Endothelial cell of umbilical vein (primary cell): ENCODE measurements at regions of chr4 and their contacts with region 1.

Region 1: DNA sequence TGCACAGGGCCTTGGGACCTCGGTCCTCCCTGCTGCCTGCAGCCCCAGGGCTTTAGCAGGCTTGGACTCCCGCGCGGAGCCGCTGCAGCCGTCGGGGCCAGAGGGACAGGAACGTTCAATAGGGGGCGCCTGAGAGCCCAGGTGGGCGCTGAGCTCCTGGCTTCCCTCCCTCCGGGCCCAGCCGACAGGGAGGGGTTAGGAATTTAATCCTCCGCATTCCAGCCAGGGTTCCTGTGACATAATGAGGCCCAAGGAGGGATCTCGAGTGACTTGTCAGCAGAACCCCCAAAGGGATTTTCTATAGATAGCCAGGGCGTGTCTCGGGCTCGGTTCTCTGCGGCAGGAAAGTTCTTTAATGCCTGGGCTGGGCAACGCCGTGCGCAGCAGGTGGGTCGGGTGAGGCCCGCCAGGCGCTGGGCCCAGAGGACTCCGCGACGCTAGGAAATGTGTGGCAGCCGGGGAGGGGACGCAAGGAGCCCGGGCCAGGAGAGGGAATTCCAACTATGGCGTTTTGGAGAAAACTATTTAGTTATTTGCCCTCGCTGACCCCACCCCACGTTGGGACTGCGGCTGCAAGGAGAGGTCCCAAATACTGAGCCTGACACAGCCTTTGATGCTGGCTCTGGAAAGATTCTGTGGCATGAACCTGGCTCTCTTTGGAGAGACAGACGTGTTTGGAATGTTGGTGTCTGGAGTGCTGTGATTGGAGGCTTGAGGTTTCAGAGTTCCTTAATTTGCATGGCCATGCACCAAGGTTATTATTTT is 285.2 kb upstream of the GATB start:
- DNase-seq: peak; percentile 21
- H3K4me3 ChIP-seq: no peak overlapping the region
- H3K27ac ChIP-seq: no peak overlapping the region
- H3K4me1 ChIP-seq: no peaks in the 10 kb centered on the region
- H3K27me3 ChIP-seq: peaks cover 9 to 24% of the 10 kb centered on the region in 2 experiments
- CTCF ChIP-seq: peak; percentile 61 to 82
- POLR2A ChIP-seq: no peak

Region 2: DNA sequence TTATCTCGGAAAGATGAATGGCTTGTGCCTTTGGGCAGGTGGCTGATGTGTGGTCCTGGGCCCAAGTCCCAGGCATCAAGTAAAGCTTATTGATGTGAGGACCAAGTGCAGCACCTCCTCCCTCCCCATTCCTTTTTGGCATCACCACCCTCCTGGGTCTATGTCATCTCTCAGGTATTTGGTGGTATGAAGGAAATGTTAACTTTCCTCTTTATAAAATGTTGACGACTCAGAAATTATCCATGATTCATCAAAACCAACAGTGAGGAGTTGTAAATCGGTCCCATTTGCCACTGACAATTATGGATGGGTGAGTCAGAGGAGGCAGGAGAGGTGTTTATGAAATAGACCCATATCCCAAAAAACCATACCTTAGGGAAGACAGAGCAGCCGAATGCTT is 55.8 kb before region 1 on chr4:
- CTCF ChIA-PET with region 1: no interaction called
- POLR2A ChIA-PET with region 1: no interaction called
- dilution Hi-C with region 1: no loop called
- intact Hi-C with region 1: loop called (anchors 2 kb)
- DNase-seq: no peak
- H3K4me3 ChIP-seq: no peak overlapping the region
- H3K27ac ChIP-seq: no peak overlapping the region
- H3K4me1 ChIP-seq: no peaks in the 10 kb centered on the region
- H3K27me3 ChIP-seq: no peaks in the 10 kb centered on the region
- CTCF ChIP-seq: no peak
- POLR2A ChIP-seq: no peak

Region 3: DNA sequence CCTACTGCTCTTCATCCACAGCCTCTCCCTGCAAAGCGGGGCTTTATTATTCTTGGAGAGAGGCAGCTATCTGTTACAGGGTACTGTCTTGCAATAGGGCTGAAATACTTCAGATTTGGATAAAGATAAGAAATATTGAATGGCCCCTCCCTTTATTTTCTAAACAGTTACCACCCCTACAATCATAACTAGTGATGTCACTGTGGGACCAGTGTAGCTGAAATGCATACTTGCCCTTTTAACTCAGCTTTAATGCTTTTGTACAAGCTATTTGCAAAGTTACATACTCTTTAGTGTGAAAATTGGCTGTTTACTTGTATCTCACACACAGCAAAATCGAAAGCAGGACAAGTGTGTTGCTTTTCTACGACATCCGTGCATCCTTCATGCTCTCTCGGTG is 23.4 kb before region 1 on chr4:
- CTCF ChIA-PET with region 1: no interaction called
- POLR2A ChIA-PET with region 1: no interaction called
- dilution Hi-C with region 1: no loop called
- intact Hi-C with region 1: no loop called
- DNase-seq: no peak
- H3K4me3 ChIP-seq: no peak overlapping the region
- H3K27ac ChIP-seq: no peak overlapping the region
- H3K4me1 ChIP-seq: no peaks in the 10 kb centered on the region
- H3K27me3 ChIP-seq: peaks cover 0 to 4% of the 10 kb centered on the region in 2 experiments
- CTCF ChIP-seq: no peak
- POLR2A ChIP-seq: no peak

Region 4: GRCh38 chr4:152369902-152370295 is 323.9 kb after region 1 on chr4:
- CTCF ChIA-PET with region 1: interaction called, 12 read pairs
- POLR2A ChIA-PET with region 1: no interaction called
- dilution Hi-C with region 1: no loop called
- intact Hi-C with region 1: loop called (anchors 1 kb)
- DNase-seq: peak; percentile 34
- H3K4me3 ChIP-seq: no peak overlapping the region
- H3K27ac ChIP-seq: no peak overlapping the region
- H3K4me1 ChIP-seq: no peaks in the 10 kb centered on the region
- H3K27me3 ChIP-seq: no peaks in the 10 kb centered on the region
- CTCF ChIP-seq: peak in 1 of 2 donors; percentile 10
- POLR2A ChIP-seq: no peak

Region 5: DNA sequence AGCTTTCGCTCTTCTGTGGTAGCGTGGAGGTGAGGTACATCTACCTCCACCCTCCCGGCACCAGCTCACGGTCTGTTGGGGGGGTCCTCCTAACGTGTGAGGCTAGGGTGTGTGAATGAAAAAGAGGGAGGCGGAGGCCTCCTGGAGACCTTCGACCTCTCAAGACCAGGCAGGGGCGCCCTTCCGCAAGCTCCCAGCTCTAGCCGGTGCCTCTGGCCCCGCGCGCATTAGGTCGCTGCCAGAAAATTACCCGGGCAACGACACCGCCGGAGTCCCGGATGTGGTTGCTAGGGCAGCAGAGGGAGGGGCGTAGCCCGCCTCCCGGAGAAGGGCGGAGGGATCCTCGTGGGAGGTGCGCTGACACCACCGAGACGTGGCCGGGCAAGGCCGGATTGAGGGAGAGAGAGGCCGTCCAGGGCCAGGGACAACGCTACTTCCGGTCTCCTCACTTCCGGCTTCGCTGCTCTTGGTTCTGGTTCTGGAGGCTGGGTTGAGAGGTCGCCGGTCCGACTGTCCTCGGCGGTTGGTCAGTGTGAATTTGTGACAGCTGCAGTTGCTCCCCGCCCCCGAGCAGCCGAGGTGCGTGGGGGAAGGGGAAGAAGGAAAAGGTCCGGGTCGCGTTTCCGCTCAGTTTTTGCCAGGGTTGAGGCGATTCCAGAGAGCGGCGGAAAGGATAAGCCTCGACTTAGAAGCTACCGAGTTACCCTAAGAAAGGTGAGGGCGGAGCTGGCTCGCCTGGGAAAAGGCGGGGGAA is 733.7 kb after region 1 on chr4 and contains the starts of genes ARFIP1 and TIGD4:
- CTCF ChIA-PET with region 1: no interaction called
- POLR2A ChIA-PET with region 1: no interaction called
- dilution Hi-C with region 1: no loop called
- intact Hi-C with region 1: no loop called
- DNase-seq: peak; percentile 96
- H3K4me3 ChIP-seq: peak within 1 kb of the TSS; percentile 67 to 76 (median 74)
- H3K27ac ChIP-seq: peak within 1 kb of the TSS; percentile 56
- H3K4me1 ChIP-seq: peaks cover 21% of the 10 kb centered on the region
- H3K27me3 ChIP-seq: peaks cover 0 to 11% of the 10 kb centered on the region in 2 experiments
- CTCF ChIP-seq: peak in 1 of 2 donors; percentile 4
- POLR2A ChIP-seq: peak; percentile 62
- total RNA-seq, gene ARFIP1: 24.2 and 24.6 TPM in 2 replicates
- total RNA-seq, gene TIGD4: 0.14 and 0.18 TPM in 2 replicates